MCF 10A (cell line): ENCODE measurements at regions of chr2 and their contacts with region 1.

Region 1: DNA sequence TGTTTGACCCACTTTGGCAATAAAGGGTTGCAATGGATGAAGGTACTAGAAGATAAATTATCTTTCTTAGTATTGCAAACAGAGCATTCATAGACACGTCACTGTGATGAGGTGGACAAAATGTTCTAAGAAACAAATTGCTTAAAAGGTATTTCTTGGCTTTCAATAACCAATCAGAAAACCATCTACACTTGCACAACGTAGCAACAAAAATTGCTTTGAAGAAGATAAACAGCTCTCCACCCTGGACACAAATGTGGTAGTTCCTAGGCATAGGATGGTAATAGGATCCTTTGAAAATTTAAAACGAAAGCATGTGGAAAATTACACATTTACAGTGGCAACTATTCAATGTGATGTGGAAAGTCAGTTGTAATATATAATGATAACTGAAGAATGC is 439.9 kb upstream of the ETAA1 start:
- DNase-seq: peak; percentile 44
- H3K4me3 Mint-ChIP-seq: no peak overlapping the region
- H3K27ac Mint-ChIP-seq: peak overlapping the region; percentile 81
- H3K4me1 Mint-ChIP-seq: peaks cover 22% of the 10 kb centered on the region
- H3K27me3 Mint-ChIP-seq: no peaks in the 10 kb centered on the region
- CTCF ChIP-seq: no peak

Region 2: DNA sequence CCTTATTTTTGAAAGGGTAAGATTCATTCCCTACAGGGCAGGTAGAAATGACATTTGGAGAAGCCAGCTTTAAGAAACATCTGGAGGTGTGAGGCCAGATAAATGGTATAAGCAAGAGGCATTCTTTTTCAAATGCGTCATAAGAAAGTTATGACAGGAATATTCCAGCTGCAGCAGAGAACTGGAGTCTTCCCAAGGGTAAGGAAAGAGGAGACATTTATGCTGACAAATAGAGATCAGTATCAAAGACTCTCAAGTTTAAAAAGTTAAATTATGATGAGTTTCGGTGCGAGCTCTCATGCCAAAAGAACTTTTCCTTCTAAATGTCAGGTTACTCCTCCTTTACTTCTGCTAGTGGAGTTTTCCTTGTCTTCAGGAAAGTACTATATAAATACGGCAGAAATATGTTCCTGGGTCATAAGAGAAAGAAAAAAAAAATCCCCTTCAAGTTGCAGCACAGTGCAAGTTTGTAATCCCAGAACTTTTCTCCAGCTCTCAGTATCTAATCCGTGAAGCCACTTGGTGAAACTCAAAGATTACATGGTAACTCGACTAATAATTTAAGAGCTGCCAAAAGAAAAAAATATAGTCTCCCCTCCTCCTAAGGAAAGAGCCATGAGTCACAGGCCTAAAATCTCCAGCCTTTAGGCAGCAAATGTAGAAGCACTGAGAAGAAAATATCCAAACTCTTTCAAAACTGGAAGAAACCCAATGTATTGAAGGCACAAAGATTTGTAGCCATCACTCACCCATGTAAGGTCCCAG is 94.1 kb before region 1 on chr2:
- CTCF ChIA-PET with region 1: no interaction called
- POLR2A ChIA-PET with region 1: interaction called, 12 read pairs
- intact Hi-C with region 1: no loop called
- DNase-seq: peak; percentile 45
- H3K4me3 Mint-ChIP-seq: peak overlapping the region; percentile 47
- H3K27ac Mint-ChIP-seq: peak overlapping the region; percentile 91
- H3K4me1 Mint-ChIP-seq: peaks cover 13% of the 10 kb centered on the region
- H3K27me3 Mint-ChIP-seq: no peaks in the 10 kb centered on the region
- CTCF ChIP-seq: no peak

Region 3: GRCh38 chr2:67180841-67181240 is 223.6 kb after region 1 on chr2:
- CTCF ChIA-PET with region 1: no interaction called
- POLR2A ChIA-PET with region 1: no interaction called
- intact Hi-C with region 1: no loop called
- DNase-seq: no peak
- H3K4me3 Mint-ChIP-seq: no peak overlapping the region
- H3K27ac Mint-ChIP-seq: no peak overlapping the region
- H3K4me1 Mint-ChIP-seq: no peaks in the 10 kb centered on the region
- H3K27me3 Mint-ChIP-seq: no peaks in the 10 kb centered on the region
- CTCF ChIP-seq: no peak